ENCODE measurements at regions of chr3 and their contacts with region 1.

Region 1: DNA sequence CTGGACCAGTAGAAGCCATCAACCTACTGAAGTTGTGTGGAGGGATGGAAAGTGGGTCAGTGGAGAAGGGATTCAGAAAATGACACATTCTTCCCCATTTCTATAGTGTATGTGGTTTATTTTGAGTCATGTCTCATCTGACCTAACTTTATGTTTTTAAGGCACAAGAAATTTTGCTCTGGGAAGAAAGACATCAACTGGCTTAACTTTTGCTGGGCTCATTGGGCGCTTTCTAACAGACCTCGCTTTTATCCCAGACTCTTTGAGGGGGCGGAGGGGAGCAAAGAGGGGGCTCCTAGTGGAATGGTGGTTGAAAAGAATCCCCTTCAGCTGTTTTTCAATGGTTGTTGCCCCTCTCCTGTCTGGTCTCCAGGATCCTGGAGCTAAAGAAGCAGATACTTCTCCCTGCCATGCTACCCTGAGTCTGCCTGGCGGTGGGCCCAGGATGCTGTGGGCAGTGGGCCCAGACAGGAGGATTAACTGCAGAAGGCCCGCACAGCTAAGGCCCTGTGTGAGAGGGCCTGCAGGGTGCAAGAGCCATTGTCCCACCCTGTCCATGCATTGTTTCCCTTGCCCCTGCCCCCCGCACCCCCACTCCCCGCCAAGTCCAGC is 14.5 kb downstream of the CSRNP1 start:
- DNase-seq: no peak
- H3K4me3 Mint-ChIP-seq: no peak overlapping the region
- H3K27ac Mint-ChIP-seq: peak overlapping the region; percentile 2
- H3K4me1 Mint-ChIP-seq: peaks cover 19% of the 10 kb centered on the region
- H3K27me3 Mint-ChIP-seq: no peaks in the 10 kb centered on the region

Region 2: GRCh38 chr3:39150799-39151631 is 12.1 kb after region 1 on chr3:
- intact Hi-C with region 1: no loop called
- DNase-seq: no peak
- H3K4me3 Mint-ChIP-seq: peak overlapping the region; percentile 89
- H3K27ac Mint-ChIP-seq: peak overlapping the region; percentile 94
- H3K4me1 Mint-ChIP-seq: peaks cover 69% of the 10 kb centered on the region
- H3K27me3 Mint-ChIP-seq: no peaks in the 10 kb centered on the region

Region 3: GRCh38 chr3:39180546-39181346 is 41.8 kb after region 1 on chr3:
- intact Hi-C with region 1: loop called (anchors 10 kb)
- DNase-seq: peak; percentile 87
- H3K4me3 Mint-ChIP-seq: peak overlapping the region; percentile 74
- H3K27ac Mint-ChIP-seq: peak overlapping the region; percentile 59
- H3K4me1 Mint-ChIP-seq: peaks cover 45% of the 10 kb centered on the region
- H3K27me3 Mint-ChIP-seq: no peaks in the 10 kb centered on the region

Region 4: DNA sequence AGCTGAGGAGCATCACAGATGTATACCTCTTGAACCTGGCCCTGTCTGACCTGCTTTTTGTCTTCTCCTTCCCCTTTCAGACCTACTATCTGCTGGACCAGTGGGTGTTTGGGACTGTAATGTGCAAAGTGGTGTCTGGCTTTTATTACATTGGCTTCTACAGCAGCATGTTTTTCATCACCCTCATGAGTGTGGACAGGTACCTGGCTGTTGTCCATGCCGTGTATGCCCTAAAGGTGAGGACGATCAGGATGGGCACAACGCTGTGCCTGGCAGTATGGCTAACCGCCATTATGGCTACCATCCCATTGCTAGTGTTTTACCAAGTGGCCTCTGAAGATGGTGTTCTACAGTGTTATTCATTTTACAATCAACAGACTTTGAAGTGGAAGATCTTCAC is 193.6 kb after region 1 on chr3:
- intact Hi-C with region 1: no loop called
- DNase-seq: no peak
- H3K4me3 Mint-ChIP-seq: peak overlapping the region; percentile 6
- H3K27ac Mint-ChIP-seq: no peak overlapping the region
- H3K4me1 Mint-ChIP-seq: peaks cover 56% of the 10 kb centered on the region
- H3K27me3 Mint-ChIP-seq: no peaks in the 10 kb centered on the region